Ascending aorta (tissue), 2 donors: ENCODE measurements at regions of chr11 and their contacts with region 1.

Region 1: GRCh38 chr11:82906244-82906654 is 4.7 kb downstream of the DDIAS start:
- DNase-seq: no peak
- H3K4me3 ChIP-seq: no peak overlapping the region
- H3K27ac ChIP-seq: no peak overlapping the region
- H3K4me1 ChIP-seq: no peaks in the 10 kb centered on the region
- H3K27me3 ChIP-seq: no peaks in the 10 kb centered on the region
- CTCF ChIP-seq: peak; percentile 47 to 62 (median 50)

Region 2: GRCh38 chr11:83249972-83250593 is 343.8 kb after region 1 on chr11:
- intact Hi-C with region 1: loop called (anchors 5 kb)
- DNase-seq: no peak
- H3K4me3 ChIP-seq: no peak overlapping the region
- H3K27ac ChIP-seq: no peak overlapping the region
- H3K4me1 ChIP-seq: peaks cover 0 to 7% of the 10 kb centered on the region in 2 donors
- H3K27me3 ChIP-seq: no peaks in the 10 kb centered on the region
- CTCF ChIP-seq: peak; percentile 39 to 66 (median 43)